Ovary (tissue), 10 donors: ENCODE measurements at regions of chr18 and their contacts with region 1.

Region 1: DNA sequence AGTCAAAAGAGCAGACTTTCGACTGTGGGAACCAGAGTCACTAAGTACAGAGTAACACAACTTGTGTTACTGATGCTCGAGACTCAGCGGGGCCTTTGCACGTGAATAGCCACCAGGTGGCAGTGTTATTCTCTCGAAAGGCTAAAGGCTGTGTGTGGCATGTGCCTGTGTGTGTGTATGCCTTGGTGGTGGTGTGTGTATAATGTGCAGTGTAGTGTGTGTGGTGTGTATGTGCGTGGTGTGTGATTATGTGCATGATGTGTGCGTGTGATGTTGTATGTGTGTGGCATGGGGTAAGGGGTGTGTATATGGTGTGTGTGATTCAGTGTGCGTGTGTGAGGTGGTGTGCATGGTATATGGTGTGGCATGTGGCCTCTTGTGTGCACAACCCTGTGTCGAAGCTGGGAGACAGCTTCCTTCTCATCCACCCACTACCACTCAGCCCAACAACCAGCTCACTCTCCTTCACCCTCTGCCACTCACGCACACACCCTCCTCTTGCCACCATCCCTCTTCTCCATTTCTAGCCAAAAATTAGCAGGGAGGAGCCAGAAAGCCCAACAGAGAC is 83.0 kb upstream of the ZNF532 start:
- DNase-seq: peak; percentile 70 to 83 (median 77)
- H3K4me3 ChIP-seq: no peak overlapping the region
- H3K27ac ChIP-seq: no peak overlapping the region
- H3K4me1 ChIP-seq: peaks cover 5% of the 10 kb centered on the region
- H3K27me3 ChIP-seq: no peaks in the 10 kb centered on the region
- CTCF ChIP-seq: peak; percentile 79 to 96 (median 82)
- EP300 ChIP-seq: no peak
- POLR2A ChIP-seq: no peak

Region 2: GRCh38 chr18:58858616-58859468 is 77.1 kb after region 1 on chr18:
- intact Hi-C with region 1: no loop called
- DNase-seq: no peak
- H3K4me3 ChIP-seq: no peak overlapping the region
- H3K27ac ChIP-seq: peak overlapping the region in 1 of 2 donors; percentile 99
- H3K4me1 ChIP-seq: peaks cover 18% of the 10 kb centered on the region
- H3K27me3 ChIP-seq: no peaks in the 10 kb centered on the region
- CTCF ChIP-seq: no peak
- EP300 ChIP-seq: no peak
- POLR2A ChIP-seq: no peak

Region 3: DNA sequence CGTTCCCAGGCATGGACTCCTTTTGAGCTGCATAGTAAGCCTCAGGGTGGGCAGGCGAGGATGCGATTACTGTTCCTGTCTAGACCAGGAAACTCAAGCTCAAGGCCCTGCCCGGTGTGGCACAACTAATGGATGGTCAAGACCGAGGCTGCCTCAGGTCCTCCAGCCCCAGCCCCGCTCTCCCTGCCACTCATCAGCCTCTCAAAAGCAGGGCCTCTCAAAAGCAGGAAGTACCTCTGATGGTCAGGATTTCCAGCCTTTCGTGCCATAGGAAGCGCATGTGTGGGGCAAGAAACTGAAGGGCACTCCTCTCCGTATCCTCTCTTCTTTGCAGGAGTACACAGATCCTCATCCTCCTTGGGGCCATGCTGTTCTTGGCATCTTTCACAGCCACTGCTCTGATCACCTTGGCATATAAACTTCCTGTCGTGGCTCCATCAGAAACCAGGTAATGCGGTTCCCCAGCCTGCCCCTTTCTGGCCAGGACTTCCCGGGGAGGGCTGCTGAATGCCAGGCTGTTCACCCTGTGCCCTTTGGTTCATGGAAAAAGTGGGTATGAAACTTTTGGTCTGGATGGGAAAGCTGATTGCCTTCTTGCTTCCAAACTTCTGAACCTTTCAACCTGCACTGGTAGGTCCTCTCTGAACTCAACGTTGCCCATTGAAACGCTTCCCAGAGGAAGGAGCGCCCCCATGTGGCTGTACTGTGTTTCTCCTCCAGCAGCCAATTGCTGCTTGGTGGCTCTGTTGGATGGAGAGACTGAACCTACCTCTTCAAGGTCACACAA is 275.2 kb after region 1 on chr18:
- intact Hi-C with region 1: loop called (anchors 2 to 5 kb)
- DNase-seq: peak; percentile 63 to 83 (median 79)
- H3K4me3 ChIP-seq: no peak overlapping the region
- H3K27ac ChIP-seq: no peak overlapping the region
- H3K4me1 ChIP-seq: no peaks in the 10 kb centered on the region
- H3K27me3 ChIP-seq: no peaks in the 10 kb centered on the region
- CTCF ChIP-seq: peak; percentile 59 to 64 (median 62)
- EP300 ChIP-seq: no peak
- POLR2A ChIP-seq: no peak

Region 4: GRCh38 chr18:59070181-59070912 is 288.6 kb after region 1 on chr18:
- intact Hi-C with region 1: loop called in 1 of 4 experiments (anchors 2 kb)
- DNase-seq: peak; percentile 73 to 90 (median 86)
- H3K4me3 ChIP-seq: no peak overlapping the region
- H3K27ac ChIP-seq: no peak overlapping the region
- H3K4me1 ChIP-seq: peaks cover 2% of the 10 kb centered on the region
- H3K27me3 ChIP-seq: no peaks in the 10 kb centered on the region
- CTCF ChIP-seq: peak; percentile 73 to 86 (median 83)
- EP300 ChIP-seq: no peak
- POLR2A ChIP-seq: no peak